ENCODE measurements at regions of chr1 and their contacts with region 1.

Region 1: GRCh38 chr1:30727824-30728223 is 4.4 kb upstream of the MATN1 start:
- DNase-seq: no peak
- H3K4me3 ChIP-seq: no peak overlapping the region
- CTCF ChIP-seq: no peak
- POLR2A ChIP-seq: no peak

Region 2: DNA sequence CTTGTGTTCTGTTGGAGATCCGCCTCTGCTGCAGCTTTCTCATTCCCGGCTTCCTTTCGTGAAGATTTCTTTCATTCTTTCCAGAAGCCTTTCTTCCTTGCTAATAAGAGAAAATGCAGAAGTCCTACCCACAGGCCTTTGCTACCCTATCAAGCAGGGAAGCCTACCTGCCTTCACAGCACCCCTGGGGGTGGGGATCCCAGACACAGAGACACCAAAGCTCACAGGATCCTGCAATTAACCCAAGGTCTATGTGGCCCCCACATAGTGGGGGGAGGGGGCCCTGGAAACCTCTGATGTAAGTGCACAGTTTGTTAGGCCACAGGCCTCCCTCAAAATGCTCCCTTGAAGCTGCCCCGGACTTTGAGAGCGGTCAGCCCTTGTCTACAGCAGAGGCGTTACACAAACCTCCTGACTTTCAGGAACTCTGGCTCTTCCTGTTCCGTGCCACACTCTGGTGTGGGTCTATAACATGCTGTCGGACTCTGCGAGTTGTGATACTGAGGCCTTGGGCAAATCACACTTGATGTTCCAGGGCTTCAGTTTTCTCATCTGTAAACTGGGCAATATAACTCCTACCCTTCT is 480.6 kb after region 1 on chr1:
- intact Hi-C with region 1: no loop called
- DNase-seq: no peak
- H3K4me3 ChIP-seq: no peak overlapping the region
- CTCF ChIP-seq: no peak
- POLR2A ChIP-seq: no peak

Region 3: DNA sequence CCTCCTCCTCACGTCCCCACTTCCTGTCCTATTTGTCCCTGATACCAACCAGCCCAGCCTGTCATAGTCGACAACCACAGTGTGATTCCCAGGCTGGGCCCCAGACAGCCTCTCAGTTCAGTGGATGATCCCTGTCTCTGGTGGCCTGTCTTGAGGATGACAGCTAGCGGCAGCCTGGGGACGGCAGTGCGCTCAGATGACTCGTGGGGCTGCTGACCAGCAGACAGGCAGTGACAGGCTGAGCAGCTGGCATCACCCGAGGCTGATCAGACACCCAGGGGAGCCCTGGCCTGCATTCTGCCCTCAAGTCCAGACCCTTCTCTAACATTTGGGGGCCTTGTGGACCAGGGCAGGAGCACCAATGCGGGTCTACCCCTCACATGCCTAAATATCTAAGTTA is 490.9 kb after region 1 on chr1:
- intact Hi-C with region 1: no loop called
- DNase-seq: no peak
- H3K4me3 ChIP-seq: no peak overlapping the region
- CTCF ChIP-seq: no peak
- POLR2A ChIP-seq: no peak

Region 4: DNA sequence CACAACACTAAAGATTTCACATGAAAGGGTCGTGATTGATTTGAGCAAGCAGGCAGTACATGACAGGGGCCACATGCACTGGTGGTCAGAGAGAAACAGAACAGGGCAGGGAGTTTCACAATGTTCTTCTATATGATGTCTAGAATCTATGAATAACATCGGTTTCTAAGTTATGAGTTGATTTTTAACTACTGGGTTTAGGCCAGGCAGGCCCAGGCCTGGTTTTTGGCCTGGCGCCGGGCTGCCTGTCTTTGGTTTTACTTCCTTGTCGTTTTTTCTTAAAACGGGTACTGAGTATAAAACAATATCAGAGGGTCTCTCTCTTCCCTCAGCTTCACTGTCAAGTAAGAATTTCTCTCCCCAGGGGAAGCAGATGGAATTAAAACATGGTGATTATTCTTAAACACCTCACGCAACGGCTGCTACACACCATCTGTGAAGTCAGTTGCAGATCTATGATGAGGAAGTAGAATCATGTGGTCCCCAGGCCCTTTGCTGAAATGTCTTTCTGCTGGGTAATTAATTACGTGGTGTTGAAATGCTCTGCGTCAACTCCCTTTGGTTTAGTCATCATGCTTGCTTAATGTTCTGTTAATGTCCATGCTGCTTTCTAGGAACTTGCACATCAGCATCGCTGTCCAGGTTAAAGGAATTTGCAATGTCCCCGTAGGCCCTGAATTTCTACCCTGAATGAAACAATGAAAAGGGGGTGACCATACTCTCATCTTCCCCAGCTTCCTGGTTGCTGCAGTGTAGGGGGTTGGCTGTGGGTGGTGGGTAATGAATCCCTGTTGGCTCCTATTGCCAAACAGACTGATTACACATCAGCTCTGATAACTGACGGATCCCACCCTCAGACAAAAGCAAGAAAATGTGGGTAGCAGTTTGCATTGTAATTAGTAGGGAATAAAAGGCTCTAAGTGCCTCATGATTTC is 755.5 kb after region 1 on chr1:
- intact Hi-C with region 1: loop called (anchors 5 kb)
- DNase-seq: peak in 1 of 2 donors; percentile 79
- H3K4me3 ChIP-seq: no peak overlapping the region
- CTCF ChIP-seq: no peak
- POLR2A ChIP-seq: no peak

Measured in lower leg skin (tissue), 4 donors.